Posterior vena cava (tissue), 2 donors: ENCODE measurements at regions of chr4 and their contacts with region 1.

Region 1: DNA sequence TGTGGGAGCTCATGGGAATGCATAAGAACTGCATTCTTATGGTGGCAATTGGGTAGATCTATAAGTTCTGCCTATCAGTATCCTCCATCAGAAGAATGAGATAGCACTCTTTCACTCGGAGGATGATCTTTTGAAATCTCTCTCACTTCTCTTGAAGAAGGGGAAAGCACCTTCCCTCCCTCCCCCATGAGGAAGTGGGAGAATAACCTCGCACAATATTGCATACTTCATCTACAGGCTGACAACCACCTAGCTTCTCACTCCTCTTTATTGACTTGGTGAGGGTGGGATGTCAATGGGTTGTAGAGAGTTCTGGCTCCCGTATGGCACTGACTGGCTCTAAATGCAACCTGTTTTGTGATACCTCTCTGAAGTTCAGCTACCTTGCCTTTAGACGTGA is 146.7 kb upstream of the SPOCK3 start:
- DNase-seq: no peak

Region 2: GRCh38 chr4:168063031-168063430 is 682.1 kb after region 1 on chr4:
- intact Hi-C with region 1: loop called in 1 of 2 experiments (anchors 5 kb)
- DNase-seq: no peak